GM12878 (cell line): ENCODE measurements at regions of chr18 and their contacts with region 1.

Region 1: GRCh38 chr18:55343396-55344073 is 244.5 kb downstream of the TCF4 start:
- DNase-seq: no peak
- ATAC-seq: peak; percentile 82
- H3K4me3 ChIP-seq: no peak overlapping the region
- H3K27ac ChIP-seq: no peak overlapping the region
- H3K4me1 ChIP-seq: no peaks in the 10 kb centered on the region
- H3K27me3 ChIP-seq: peaks cover 0 to 3% of the 10 kb centered on the region in 2 experiments; a peak in 1 of 4 replicates
- CTCF ChIP-seq: peak; percentile 58 to 65 (median 58); a peak in 5 of 6 replicates
- EP300 ChIP-seq: no peak
- POLR2A ChIP-seq: no peak
- RAD21 ChIP-seq: peak; percentile 68

Region 2: DNA sequence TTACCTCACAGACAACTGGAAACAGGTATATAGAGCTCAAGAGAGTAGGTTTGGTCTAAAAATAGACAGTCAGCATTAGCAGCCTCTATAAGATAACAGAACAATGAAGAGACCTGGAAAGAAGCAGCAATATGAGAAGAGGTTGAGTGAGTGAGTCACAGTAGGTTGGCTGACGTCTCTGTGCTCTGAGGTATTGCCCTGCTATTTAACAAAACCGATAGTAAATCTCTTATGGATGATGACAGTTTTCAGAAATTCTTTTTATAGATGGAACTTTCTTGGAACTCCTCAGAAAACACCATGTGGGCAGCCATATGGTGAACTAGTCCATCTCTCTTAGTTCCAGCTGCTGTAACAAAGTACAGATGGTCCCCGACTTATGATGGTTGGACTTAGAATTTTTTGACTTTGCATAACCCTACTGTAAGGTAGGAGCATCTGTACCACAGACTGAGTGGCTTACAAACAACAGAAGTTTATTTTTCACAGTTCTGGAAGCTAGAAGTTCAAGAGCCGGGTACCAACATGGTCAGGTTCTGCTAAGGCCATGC is 1242.5 kb before region 1 on chr18:
- CTCF ChIA-PET with region 1: no interaction called
- POLR2A ChIA-PET with region 1: no interaction called
- RAD21 ChIA-PET with region 1: no interaction called
- SMC1A ChIA-PET with region 1: no interaction called
- in situ Hi-C with region 1: no loop called
- intact Hi-C with region 1: no loop called
- DNase-seq: no peak
- ATAC-seq: no peak
- H3K4me3 ChIP-seq: no peak overlapping the region
- H3K27ac ChIP-seq: no peak overlapping the region
- H3K4me1 ChIP-seq: no peaks in the 10 kb centered on the region
- H3K27me3 ChIP-seq: no peaks in the 10 kb centered on the region
- CTCF ChIP-seq: no peak
- EP300 ChIP-seq: no peak
- POLR2A ChIP-seq: no peak
- RAD21 ChIP-seq: no peak

Region 3: DNA sequence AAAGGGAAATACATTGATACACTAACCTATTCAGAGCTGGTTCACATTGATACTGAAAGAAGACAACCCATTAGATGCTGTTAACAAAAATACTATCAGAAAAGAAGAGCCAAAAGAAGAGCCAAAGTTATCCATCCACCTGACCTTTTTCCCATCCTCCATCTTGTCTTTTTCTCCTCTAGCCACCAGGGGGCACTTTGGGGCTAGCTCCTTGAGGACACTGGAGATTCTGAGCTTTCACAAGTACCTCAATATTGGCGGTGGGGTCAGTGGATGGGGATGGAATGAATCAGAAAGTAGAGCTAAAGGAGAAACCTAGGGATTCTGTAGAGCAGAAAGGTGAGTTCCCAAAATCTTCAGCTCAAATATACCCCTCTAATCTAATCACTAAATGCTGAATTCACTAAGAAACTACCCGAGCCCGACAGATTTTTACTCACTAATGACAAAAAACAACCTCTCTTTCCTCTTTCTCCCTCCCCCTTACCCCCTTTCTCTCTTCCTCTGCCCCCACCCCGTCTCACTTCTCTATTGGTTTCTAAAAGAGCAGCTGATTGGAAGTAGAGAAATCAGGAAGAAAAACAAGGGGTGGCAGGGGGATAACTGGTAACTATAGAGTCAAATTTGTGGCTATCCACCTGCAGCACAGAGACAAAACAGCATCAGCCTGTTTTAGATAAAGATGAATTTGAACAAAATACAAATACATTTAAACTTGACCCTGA is 41.2 kb after region 1 on chr18:
- CTCF ChIA-PET with region 1: interaction called, 10 read pairs
- POLR2A ChIA-PET with region 1: no interaction called
- RAD21 ChIA-PET with region 1: no interaction called
- SMC1A ChIA-PET with region 1: interaction called, 7 read pairs
- in situ Hi-C with region 1: no loop called
- intact Hi-C with region 1: no loop called
- DNase-seq: no peak
- ATAC-seq: peak; percentile 59
- H3K4me3 ChIP-seq: no peak overlapping the region
- H3K27ac ChIP-seq: no peak overlapping the region
- H3K4me1 ChIP-seq: no peaks in the 10 kb centered on the region
- H3K27me3 ChIP-seq: no peaks in the 10 kb centered on the region
- CTCF ChIP-seq: peak; percentile 42 to 62 (median 47)
- EP300 ChIP-seq: no peak
- POLR2A ChIP-seq: no peak
- RAD21 ChIP-seq: peak; percentile 57

Region 4: DNA sequence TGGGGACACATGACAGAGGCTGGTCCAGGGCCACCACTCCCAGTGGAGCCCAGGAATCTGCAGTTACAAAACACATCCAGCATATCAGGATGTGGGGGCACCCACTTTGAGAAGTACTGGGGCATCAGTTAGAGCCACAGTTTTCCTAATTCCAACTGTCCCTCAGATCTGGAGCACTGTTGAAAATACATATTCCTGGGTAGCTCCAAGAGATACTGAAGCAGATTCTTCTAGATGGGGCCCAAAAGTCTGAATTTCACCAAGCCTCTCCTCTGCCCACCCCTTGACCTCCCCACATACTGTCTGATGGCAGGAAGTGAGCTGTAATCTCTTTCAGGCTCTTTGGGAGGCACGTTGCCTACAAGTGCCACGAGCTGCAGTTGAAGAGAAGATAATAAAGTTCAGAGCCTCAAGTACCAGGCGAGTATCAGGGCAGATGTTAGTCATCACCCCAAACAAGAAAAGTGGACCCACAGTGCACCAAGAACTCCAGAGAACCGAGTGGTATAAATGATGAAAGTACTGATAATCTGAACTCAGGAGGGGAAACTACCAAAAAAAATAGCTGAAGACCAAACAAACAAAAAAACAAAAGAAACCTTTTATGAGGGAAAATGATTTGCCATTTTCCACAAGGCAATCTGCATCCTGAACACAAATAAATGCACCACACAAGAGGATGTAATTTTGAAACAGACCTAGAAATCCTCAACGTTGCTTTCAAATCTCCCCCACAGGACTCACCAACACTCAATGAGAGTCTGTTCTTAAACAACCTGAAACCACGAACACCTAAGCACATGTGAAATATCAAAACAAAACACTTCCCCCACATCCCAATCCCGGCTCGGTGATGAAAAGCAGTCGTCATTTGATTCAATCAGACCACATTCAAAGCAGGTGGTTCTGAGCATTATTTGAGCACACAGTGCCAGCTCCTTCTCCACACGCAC is 145.8 kb after region 1 on chr18:
- CTCF ChIA-PET with region 1: no interaction called
- POLR2A ChIA-PET with region 1: no interaction called
- RAD21 ChIA-PET with region 1: no interaction called
- SMC1A ChIA-PET with region 1: no interaction called
- in situ Hi-C with region 1: no loop called
- intact Hi-C with region 1: loop called (anchors 10 kb)
- DNase-seq: peak; percentile 8
- ATAC-seq: peak; percentile 76
- H3K4me3 ChIP-seq: no peak overlapping the region
- H3K27ac ChIP-seq: no peak overlapping the region
- H3K4me1 ChIP-seq: peaks cover 10% of the 10 kb centered on the region
- H3K27me3 ChIP-seq: no peaks in the 10 kb centered on the region
- CTCF ChIP-seq: no peak
- EP300 ChIP-seq: peak in 1 of 2 experiments; percentile 53; a peak in 1 of 4 replicates
- POLR2A ChIP-seq: no peak
- RAD21 ChIP-seq: no peak